ENCODE measurements at regions of chr6 and their contacts with region 1.

Region 1: GRCh38 chr6:16909658-16910360 is 148.5 kb upstream of the ATXN1 start:
- DNase-seq: no peak
- H3K4me3 Mint-ChIP-seq: no peak overlapping the region
- H3K27ac Mint-ChIP-seq: no peak overlapping the region
- H3K4me1 Mint-ChIP-seq: no peaks in the 10 kb centered on the region
- H3K27me3 Mint-ChIP-seq: peaks cover 12% of the 10 kb centered on the region

Region 2: GRCh38 chr6:16894301-16894700 is 15.5 kb before region 1 on chr6:
- intact Hi-C with region 1: no loop called
- DNase-seq: no peak
- H3K4me3 Mint-ChIP-seq: no peak overlapping the region
- H3K27ac Mint-ChIP-seq: no peak overlapping the region
- H3K4me1 Mint-ChIP-seq: no peaks in the 10 kb centered on the region
- H3K27me3 Mint-ChIP-seq: peaks cover 20% of the 10 kb centered on the region

Region 3: DNA sequence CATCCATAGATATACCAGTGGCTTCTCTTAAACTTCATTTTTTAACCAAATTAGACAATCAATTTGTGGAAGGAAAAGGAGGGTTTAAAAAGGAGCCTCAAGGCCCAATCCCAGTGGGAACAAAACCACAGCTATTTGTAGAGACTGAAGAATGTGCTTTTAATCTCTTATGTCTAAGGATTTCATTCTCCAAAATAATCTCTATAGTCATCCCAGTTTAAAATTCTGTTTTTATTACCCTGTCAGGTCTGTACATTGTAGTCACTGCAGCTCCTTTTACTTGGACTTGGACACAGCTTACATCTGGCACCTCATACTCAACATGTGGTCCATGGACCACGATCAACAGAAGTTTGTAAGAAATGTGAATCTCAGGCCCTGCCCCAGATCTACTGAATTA is 39.9 kb after region 1 on chr6:
- intact Hi-C with region 1: loop called (anchors 5 kb)
- DNase-seq: no peak
- H3K4me3 Mint-ChIP-seq: no peak overlapping the region
- H3K27ac Mint-ChIP-seq: no peak overlapping the region
- H3K4me1 Mint-ChIP-seq: peaks cover 25% of the 10 kb centered on the region
- H3K27me3 Mint-ChIP-seq: peaks cover 16% of the 10 kb centered on the region